ENCODE measurements at regions of chr4 and their contacts with region 1.

Region 1: GRCh38 chr4:20044502-20044911 is 207.2 kb upstream of the SLIT2 start:
- DNase-seq: peak; percentile 32
- H3K4me3 ChIP-seq: no peak overlapping the region
- H3K27ac ChIP-seq: no peak overlapping the region
- H3K4me1 ChIP-seq: peaks cover 28% of the 10 kb centered on the region
- H3K27me3 ChIP-seq: no peaks in the 10 kb centered on the region
- CTCF ChIP-seq: no peak
- POLR2A ChIP-seq: no peak

Region 2: DNA sequence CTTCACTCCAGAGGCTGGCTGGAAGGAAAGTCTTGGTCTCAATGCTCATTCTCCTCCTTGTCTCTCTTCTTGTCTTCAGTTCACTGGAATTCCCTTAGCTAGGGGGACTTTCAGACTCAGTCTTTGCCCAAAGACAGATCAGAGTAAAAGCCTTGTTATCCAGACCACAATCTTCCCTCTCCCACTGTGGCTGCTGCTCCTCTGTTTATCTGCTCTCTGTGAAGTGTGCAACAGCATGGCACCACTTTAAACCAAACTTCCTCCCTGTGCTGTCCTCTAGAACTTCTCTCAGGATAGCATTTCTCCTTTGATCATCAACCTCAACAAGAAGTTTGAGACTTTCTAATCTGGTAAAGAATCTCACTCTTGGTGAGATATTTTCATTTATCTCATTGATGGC is 322.9 kb before region 1 on chr4:
- CTCF ChIA-PET with region 1: no interaction called
- POLR2A ChIA-PET with region 1: no interaction called
- dilution Hi-C with region 1: no loop called
- intact Hi-C with region 1: loop called (anchors 5 kb)
- DNase-seq: peak; percentile 32
- H3K4me3 ChIP-seq: no peak overlapping the region
- H3K27ac ChIP-seq: no peak overlapping the region
- H3K4me1 ChIP-seq: peaks cover 39% of the 10 kb centered on the region
- H3K27me3 ChIP-seq: no peaks in the 10 kb centered on the region
- CTCF ChIP-seq: no peak
- POLR2A ChIP-seq: no peak

Region 3: DNA sequence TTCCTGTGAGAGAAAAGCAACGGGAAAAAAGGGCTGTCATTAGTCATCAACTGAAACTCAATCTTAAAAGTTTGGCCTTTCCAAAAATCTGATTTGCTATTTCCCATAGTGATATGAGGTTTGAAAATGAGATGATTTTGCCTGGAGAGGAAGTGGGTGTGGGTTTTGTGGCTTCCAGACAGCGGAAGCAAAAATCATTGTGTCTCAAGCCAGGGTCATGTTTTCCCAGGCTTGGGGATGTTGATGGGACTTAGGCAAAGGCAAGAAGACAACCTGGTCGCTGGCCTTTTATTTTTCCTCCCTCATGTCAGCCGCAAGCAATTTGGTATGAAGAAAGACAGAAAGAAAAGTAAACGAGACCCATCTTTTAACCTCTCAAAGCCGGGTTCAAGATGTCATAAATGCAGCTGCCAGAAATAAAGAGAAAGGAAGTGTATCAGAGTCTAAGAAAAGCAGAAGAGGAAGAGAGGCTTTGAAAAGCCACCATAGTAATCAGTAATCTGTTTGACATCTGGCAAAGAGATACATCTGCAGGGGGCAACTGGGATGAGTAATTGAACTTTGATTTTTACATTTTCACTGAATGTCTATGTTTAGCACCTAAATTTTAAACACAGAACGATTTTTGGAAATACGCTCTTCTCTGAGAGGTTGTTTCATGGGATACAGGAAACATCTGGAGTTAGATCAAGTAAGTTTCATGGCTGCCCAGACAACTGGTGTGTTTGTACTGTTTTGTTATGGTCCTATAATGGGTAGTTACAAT is 314.4 kb before region 1 on chr4:
- CTCF ChIA-PET with region 1: no interaction called
- POLR2A ChIA-PET with region 1: no interaction called
- dilution Hi-C with region 1: no loop called
- intact Hi-C with region 1: loop called (anchors 2 kb)
- DNase-seq: peak; percentile 86
- H3K4me3 ChIP-seq: no peak overlapping the region
- H3K27ac ChIP-seq: peak overlapping the region; percentile 87
- H3K4me1 ChIP-seq: peaks cover 31% of the 10 kb centered on the region
- H3K27me3 ChIP-seq: no peaks in the 10 kb centered on the region
- CTCF ChIP-seq: no peak
- POLR2A ChIP-seq: no peak

Region 4: GRCh38 chr4:19776021-19776459 is 268.5 kb before region 1 on chr4:
- CTCF ChIA-PET with region 1: no interaction called
- POLR2A ChIA-PET with region 1: no interaction called
- dilution Hi-C with region 1: no loop called
- intact Hi-C with region 1: loop called (anchors 1 kb)
- DNase-seq: peak; percentile 96
- H3K4me3 ChIP-seq: no peak overlapping the region
- H3K27ac ChIP-seq: peak overlapping the region; percentile 72
- H3K4me1 ChIP-seq: peaks cover 22% of the 10 kb centered on the region
- H3K27me3 ChIP-seq: no peaks in the 10 kb centered on the region
- CTCF ChIP-seq: no peak
- POLR2A ChIP-seq: no peak

Region 5: DNA sequence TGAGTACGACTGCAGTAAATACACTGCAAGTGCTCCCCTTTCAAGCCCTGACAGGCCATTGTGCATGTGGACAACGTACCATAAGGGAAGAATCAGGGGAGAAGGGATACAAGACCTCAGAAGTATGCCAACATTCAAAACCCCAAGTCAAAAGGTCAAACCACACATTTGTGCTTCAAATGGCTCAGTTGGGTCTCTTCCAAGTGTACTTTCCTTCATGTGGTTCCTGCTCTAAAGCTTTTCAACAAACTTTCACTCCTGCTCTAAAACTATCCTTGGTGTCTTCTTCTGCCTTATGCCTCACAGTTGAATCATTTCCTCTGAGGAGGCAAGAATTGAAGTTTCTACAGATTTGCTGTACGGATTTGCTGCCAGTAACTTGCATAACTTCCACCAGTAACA is 98.5 kb before region 1 on chr4:
- CTCF ChIA-PET with region 1: no interaction called
- POLR2A ChIA-PET with region 1: no interaction called
- dilution Hi-C with region 1: no loop called
- intact Hi-C with region 1: loop called (anchors 2 kb)
- DNase-seq: peak; percentile 84
- H3K4me3 ChIP-seq: no peak overlapping the region
- H3K27ac ChIP-seq: peak overlapping the region; percentile 19
- H3K4me1 ChIP-seq: peaks cover 18% of the 10 kb centered on the region
- H3K27me3 ChIP-seq: no peaks in the 10 kb centered on the region
- CTCF ChIP-seq: no peak
- POLR2A ChIP-seq: no peak

Region 6: DNA sequence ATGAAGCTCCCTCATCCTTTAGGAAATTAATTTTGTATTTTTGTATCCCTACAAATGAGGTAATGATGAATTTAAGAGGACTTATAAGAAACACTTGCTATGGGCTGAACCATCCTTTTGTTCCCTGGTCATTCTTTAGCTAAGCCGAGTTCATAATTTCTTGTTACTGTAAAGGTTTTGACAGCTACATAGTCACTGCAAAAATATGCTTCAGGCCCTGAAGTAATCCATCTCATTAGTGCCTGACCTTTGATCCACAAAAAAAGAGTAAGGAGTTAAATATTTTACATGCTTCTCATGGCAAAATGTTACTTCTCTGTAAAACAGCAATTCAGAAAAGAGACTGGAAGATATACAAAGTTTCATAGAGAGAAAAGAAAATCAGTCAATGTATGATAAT is 83.4 kb before region 1 on chr4:
- CTCF ChIA-PET with region 1: no interaction called
- POLR2A ChIA-PET with region 1: no interaction called
- dilution Hi-C with region 1: no loop called
- intact Hi-C with region 1: no loop called
- DNase-seq: no peak
- H3K4me3 ChIP-seq: no peak overlapping the region
- H3K27ac ChIP-seq: no peak overlapping the region
- H3K4me1 ChIP-seq: no peaks in the 10 kb centered on the region
- H3K27me3 ChIP-seq: no peaks in the 10 kb centered on the region
- CTCF ChIP-seq: no peak
- POLR2A ChIP-seq: no peak

Region 7: DNA sequence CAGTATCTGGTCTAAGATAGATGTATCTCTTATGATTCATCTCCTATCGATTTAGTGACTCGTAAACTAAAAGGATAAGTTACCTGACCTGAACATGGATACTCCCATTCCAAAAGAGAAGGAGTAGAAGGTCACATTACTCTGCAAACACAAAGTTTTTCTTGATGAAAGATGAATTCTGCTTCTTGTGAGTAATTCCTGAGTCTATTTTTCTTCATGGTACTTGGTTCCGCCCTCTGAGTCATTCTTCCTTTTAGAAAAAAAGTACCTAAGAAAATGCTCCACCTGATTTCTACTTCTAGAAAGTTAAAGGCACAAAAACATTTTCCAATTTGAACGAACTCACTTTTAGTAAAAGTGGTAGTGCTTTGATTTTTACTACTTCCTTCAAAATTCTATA is 15.8 kb before region 1 on chr4:
- CTCF ChIA-PET with region 1: no interaction called
- POLR2A ChIA-PET with region 1: no interaction called
- dilution Hi-C with region 1: no loop called
- intact Hi-C with region 1: loop called (anchors 2 kb)
- DNase-seq: peak; percentile 75
- H3K4me3 ChIP-seq: no peak overlapping the region
- H3K27ac ChIP-seq: no peak overlapping the region
- H3K4me1 ChIP-seq: peaks cover 29% of the 10 kb centered on the region
- H3K27me3 ChIP-seq: no peaks in the 10 kb centered on the region
- CTCF ChIP-seq: no peak
- POLR2A ChIP-seq: no peak

Region 8: DNA sequence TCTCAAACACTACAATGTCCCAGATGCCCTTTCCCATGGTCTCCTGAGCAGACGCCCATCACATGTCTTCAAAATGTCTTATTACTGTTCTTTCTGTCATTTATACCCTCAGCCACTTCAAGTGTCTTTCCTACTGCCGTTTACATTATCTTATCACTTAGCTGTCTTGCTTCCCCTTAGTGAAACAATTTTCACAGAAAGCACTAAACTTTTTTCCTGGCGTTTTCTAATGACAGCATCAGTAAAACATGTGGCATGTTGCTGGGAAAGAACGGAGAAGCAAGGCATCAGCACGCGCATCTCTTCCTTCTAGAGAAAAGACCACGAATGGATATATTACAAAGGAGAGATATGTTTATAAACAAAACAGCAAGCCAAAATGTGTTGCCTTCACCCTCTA is 17.5 kb after region 1 on chr4:
- CTCF ChIA-PET with region 1: no interaction called
- POLR2A ChIA-PET with region 1: no interaction called
- dilution Hi-C with region 1: no loop called
- intact Hi-C with region 1: no loop called
- DNase-seq: no peak
- H3K4me3 ChIP-seq: no peak overlapping the region
- H3K27ac ChIP-seq: no peak overlapping the region
- H3K4me1 ChIP-seq: no peaks in the 10 kb centered on the region
- H3K27me3 ChIP-seq: no peaks in the 10 kb centered on the region
- CTCF ChIP-seq: no peak
- POLR2A ChIP-seq: no peak

Region 9: DNA sequence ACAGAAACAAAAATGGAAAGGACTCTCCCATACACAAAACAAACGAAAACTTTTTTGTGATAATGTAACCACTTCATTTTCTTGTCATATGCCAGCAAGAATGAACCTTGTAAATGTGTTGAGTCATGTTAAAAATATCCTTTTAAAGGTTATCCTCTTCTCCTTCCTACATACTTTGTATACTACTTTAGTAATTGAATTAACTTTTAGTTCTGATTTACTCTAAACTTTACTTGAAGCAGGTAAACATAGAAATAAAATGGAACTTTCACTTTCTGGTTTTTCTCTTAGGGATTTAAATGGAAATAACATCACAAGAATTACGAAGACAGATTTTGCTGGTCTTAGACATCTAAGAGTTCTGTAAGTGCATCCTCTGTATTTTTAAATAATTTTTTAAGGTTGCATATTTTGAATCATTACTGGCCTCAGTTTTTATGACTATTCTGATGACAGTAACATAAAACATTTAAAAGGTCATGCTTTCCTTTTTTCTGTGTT is 211.9 kb after region 1 on chr4:
- CTCF ChIA-PET with region 1: no interaction called
- POLR2A ChIA-PET with region 1: no interaction called
- dilution Hi-C with region 1: no loop called
- intact Hi-C with region 1: no loop called
- DNase-seq: peak; percentile 34
- H3K4me3 ChIP-seq: peak overlapping the region in 1 of 3 experiments; percentile 79
- H3K27ac ChIP-seq: no peak overlapping the region
- H3K4me1 ChIP-seq: peaks cover 38% of the 10 kb centered on the region
- H3K27me3 ChIP-seq: no peaks in the 10 kb centered on the region
- CTCF ChIP-seq: no peak
- POLR2A ChIP-seq: no peak